ENCODE measurements at regions of chr20 and their contacts with region 1.

Region 1: DNA sequence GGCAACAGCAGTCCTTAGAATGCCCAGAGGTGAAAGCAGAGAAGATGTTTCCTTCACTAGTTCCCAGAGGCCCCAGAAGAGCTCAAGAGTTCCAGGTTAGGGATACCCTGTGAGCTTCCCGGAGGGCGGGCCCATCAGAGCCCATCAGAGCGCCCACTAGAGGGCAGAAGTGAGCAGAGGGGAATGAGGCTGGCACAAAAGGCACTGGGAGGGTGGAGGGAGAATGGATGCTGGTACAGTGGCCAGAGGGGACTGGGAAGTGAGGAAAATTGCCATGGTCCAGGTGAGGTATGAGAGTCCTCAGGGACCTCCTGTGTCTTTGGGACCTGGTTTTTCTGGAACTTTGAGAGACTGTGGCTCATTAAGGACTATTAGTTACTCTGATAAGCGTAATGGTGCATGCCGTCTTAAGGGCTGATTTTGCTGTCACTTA is 57.3 kb downstream of the LINC00237 start:
- DNase-seq: no peak
- ATAC-seq: no peak
- H3K4me3 ChIP-seq: no peak overlapping the region
- H3K27ac ChIP-seq: no peak overlapping the region
- H3K4me1 ChIP-seq: no peaks in the 10 kb centered on the region
- H3K27me3 ChIP-seq: peaks cover 0 to 3% of the 10 kb centered on the region in 2 donors

Region 2: DNA sequence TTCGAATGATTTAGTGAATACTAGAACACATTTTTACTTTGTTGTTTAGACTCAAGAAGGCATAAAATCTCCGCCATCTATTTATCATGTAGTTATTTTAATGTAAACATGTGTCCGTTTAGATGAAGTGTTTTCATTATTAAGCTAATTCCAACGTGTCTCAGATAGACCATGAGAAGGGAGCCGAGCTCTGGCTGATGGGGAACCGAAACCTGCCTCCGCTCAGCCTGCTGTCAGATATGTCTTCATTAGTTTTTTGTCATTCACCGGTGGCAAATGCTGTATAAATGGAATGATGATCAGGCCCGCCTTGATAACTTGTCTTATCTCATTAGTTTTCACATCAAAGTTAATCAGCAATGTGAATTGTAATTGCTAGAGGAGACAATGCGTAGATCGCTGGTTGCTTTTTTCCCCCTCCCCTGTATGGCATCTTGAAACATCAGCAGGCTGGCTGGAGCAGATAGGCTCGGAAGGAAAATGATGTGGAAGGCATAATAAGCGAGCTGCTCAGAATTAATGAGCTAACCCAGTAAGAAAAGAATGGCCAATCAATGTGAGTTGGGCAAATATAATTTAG is 79.1 kb before region 1 on chr20:
- intact Hi-C with region 1: loop called in 1 of 2 experiments (anchors 10 kb)
- DNase-seq: no peak
- ATAC-seq: no peak
- H3K4me3 ChIP-seq: no peak overlapping the region
- H3K27ac ChIP-seq: no peak overlapping the region
- H3K4me1 ChIP-seq: no peaks in the 10 kb centered on the region
- H3K27me3 ChIP-seq: no peaks in the 10 kb centered on the region

Region 3: GRCh38 chr20:21583486-21584168 is 534.8 kb after region 1 on chr20:
- intact Hi-C with region 1: loop called in 1 of 2 experiments (anchors 10 kb)
- DNase-seq: no peak
- ATAC-seq: no peak
- H3K4me3 ChIP-seq: no peak overlapping the region
- H3K27ac ChIP-seq: no peak overlapping the region
- H3K4me1 ChIP-seq: no peaks in the 10 kb centered on the region
- H3K27me3 ChIP-seq: no peaks in the 10 kb centered on the region